Panc1 (cell line): ENCODE measurements at regions of chr9 and their contacts with region 1.

Region 1: GRCh38 chr9:34686231-34686630 is 4.8 kb downstream of the CCL19 start:
- DNase-seq: no peak
- ATAC-seq: no peak
- H3K4me3 ChIP-seq: no peak overlapping the region
- H3K27ac ChIP-seq: no peak overlapping the region
- H3K4me1 ChIP-seq: no peaks in the 10 kb centered on the region
- H3K27me3 ChIP-seq: no peaks in the 10 kb centered on the region
- CTCF ChIP-seq: no peak

Region 2: DNA sequence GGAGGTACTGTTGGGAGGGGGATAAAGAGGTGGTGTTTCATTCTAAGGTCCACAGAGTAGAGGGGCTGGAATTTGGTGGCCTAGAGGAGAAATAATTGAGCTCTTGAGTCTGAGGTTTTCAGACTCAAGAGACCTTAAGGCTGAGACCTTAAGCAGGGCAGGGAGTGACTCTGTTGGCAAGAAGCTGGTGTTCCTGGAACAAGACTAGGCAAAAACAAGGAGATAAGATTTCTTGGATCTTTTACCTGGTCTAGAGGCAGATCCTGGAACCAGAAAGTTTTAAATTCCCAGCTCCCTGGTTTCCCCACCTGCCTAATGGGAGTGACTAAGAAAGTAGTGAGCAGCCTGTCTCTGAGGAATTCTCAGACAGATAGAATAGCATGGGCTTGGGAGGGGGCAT is 27.8 kb after region 1 on chr9:
- CTCF ChIA-PET with region 1: interaction called, 10 read pairs
- POLR2A ChIA-PET with region 1: no interaction called
- in situ Hi-C with region 1: no loop called
- intact Hi-C with region 1: no loop called
- DNase-seq: no peak
- ATAC-seq: no peak
- H3K4me3 ChIP-seq: no peak overlapping the region
- H3K27ac ChIP-seq: no peak overlapping the region
- H3K4me1 ChIP-seq: no peaks in the 10 kb centered on the region; the same call in 1 of the 2 replicates
- H3K27me3 ChIP-seq: no peaks in the 10 kb centered on the region; the same call in 1 of the 2 replicates
- CTCF ChIP-seq: no peak

Region 3: DNA sequence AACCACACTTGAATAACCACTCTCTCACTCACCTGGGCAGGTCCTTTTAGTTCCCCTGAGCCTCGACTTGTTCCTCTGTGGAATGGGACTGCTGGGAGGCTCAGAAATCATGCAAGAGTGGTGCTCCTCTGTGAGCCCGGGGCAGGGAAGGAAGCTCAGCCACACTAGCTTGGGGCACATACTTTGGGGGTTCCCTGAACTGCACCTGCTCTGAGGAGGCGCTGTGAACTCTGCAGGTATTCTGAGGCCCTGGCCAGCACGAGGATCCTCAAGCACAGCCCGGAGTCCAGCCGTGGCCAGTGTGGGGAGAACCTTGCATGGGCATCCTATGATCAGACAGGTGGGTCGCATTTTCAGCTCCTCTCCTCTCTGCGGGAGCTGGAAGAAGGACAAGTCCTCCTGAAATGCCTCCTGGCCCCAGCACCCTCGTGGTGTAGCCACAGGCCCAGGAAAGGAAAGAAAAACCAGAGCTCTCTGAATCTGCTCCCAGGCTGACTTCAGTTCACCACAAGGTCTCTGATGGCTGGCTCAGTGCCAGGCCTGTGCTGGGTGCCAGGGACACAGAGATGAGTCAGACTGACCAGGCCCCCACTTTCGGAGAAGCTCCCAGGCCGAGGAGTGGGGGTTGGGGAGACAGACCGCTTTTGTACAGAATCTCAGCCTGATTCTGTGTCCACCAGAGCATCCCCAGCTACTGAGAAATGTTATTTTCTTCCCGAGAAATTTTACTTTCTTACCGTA is 1462.2 kb after region 1 on chr9:
- CTCF ChIA-PET with region 1: no interaction called
- POLR2A ChIA-PET with region 1: interaction called, 13 read pairs
- in situ Hi-C with region 1: no loop called
- intact Hi-C with region 1: no loop called
- DNase-seq: no peak
- ATAC-seq: peak; percentile 59
- H3K4me3 ChIP-seq: no peak overlapping the region
- H3K27ac ChIP-seq: no peak overlapping the region
- H3K4me1 ChIP-seq: peaks cover 6% of the 10 kb centered on the region
- H3K27me3 ChIP-seq: no peaks in the 10 kb centered on the region
- CTCF ChIP-seq: no peak